ENCODE measurements at regions of chrX and their contacts with region 1.

Region 1: DNA sequence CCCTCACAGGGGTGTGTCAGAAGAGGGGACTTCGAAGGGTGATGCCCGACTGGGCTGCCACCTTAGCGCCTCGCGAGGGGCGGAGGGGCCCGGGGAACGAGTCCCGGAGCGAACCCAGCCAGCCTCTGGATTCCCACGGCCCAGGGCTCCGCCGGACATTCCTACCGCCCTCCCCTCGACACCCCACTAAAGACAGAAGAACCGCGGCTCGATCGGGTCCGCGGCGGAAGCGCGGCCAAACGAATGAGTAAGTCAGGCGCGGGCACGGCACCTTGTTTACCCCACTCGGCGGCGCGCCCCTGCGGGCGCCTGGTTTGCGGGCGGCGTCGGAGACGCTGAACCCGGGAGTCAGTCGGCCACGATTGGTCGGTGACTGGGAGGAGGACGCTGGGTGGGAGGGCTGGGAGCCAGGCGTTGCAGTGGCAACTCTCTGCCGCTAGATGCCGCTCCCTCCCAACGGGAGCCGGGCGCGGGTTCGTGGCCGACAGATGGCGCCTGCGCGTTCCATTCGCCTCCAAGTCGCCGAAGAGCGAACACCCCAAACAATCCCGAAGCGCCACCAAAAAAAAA is 1.4 kb upstream of the STAG2 start:
- DNase-seq: peak; percentile 87 to 93 (median 92)
- ATAC-seq: peak; percentile 73 to 92 (median 88)
- H3K4me3 ChIP-seq: peak overlapping the region; percentile 51 to 97 (median 80)
- H3K27ac ChIP-seq: peak overlapping the region; percentile 87 to 100 (median 98)
- H3K4me1 ChIP-seq: peaks cover 0 to 23% (median 9%) of the 10 kb centered on the region in 12 donors
- H3K27me3 ChIP-seq: no peaks in the 10 kb centered on the region
- CTCF ChIP-seq: peak; percentile 76 to 96 (median 84)
- POLR2A ChIP-seq: peak in 1 of 2 donors; percentile 76

Region 2: GRCh38 chrX:123740006-123740405 is 220.1 kb before region 1 on chrX:
- intact Hi-C with region 1: no loop called
- DNase-seq: no peak
- ATAC-seq: no peak
- H3K4me3 ChIP-seq: no peak overlapping the region
- H3K27ac ChIP-seq: no peak overlapping the region
- H3K4me1 ChIP-seq: no peaks in the 10 kb centered on the region
- H3K27me3 ChIP-seq: no peaks in the 10 kb centered on the region
- CTCF ChIP-seq: no peak
- POLR2A ChIP-seq: no peak

Region 3: DNA sequence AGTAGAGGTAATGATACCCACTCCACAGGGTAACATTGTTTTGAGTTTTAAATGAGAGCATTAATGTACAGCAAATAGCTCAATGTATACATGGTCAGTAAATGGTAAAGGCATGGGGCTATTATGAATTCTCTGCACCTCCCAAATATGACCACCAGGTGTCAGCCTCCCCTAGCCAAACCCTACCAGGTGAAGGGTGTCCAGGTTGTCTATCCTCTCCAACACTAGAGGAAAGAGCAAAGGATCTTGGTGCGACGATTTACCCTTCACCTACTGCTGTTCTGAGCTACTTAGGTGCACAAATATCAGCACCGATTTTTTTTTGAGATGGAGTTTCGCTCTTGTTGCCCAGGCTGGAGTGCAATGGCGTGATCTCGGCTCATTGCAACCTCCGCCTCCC is 126.7 kb before region 1 on chrX:
- intact Hi-C with region 1: loop called in 2 of 10 experiments (anchors 10 kb)
- DNase-seq: peak in 2 of 5 donors; percentile 13 to 25
- ATAC-seq: peak in 3 of 4 donors; percentile 74 to 88 (median 85)
- H3K4me3 ChIP-seq: no peak overlapping the region
- H3K27ac ChIP-seq: no peak overlapping the region
- H3K4me1 ChIP-seq: no peaks in the 10 kb centered on the region
- H3K27me3 ChIP-seq: no peaks in the 10 kb centered on the region
- CTCF ChIP-seq: peak; percentile 60 to 78 (median 70)
- POLR2A ChIP-seq: no peak

Region 4: DNA sequence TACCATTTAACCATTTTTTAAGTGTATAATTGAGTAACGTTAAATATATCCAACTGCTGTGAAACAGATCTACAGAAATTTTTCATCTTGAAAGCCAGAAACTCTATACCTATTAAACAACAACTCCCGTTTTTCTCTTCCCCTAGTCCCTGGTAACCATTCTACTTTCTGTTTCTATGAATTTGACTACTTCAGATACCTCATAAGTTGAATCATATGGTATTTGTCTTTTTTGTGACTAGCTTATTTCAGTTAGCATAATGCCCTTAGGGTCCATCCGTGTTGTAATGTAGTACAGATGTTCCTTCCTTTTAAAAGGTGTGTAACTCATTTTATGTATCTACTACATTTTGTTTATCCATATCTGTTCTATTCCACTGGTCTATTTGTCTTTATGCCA is 50.0 kb after region 1 on chrX:
- intact Hi-C with region 1: loop called in 4 of 10 experiments (anchors 5 to 10 kb)
- DNase-seq: no peak
- ATAC-seq: no peak
- H3K4me3 ChIP-seq: no peak overlapping the region
- H3K27ac ChIP-seq: no peak overlapping the region
- H3K4me1 ChIP-seq: peaks cover 0 to 22% (median 0%) of the 10 kb centered on the region in 12 donors
- H3K27me3 ChIP-seq: no peaks in the 10 kb centered on the region
- CTCF ChIP-seq: no peak
- POLR2A ChIP-seq: no peak

Region 5: GRCh38 chrX:124018023-124018422 is 57.9 kb after region 1 on chrX:
- intact Hi-C with region 1: loop called in 5 of 10 experiments (anchors 5 to 10 kb)
- DNase-seq: no peak
- ATAC-seq: no peak
- H3K4me3 ChIP-seq: no peak overlapping the region
- H3K27ac ChIP-seq: no peak overlapping the region
- H3K4me1 ChIP-seq: peaks cover 0 to 22% (median 0%) of the 10 kb centered on the region in 12 donors
- H3K27me3 ChIP-seq: no peaks in the 10 kb centered on the region
- CTCF ChIP-seq: peak in 4 of 12 donors; percentile 12 to 29 (median 20)
- POLR2A ChIP-seq: no peak

Region 6: GRCh38 chrX:124023838-124024238 is 63.7 kb after region 1 on chrX:
- intact Hi-C with region 1: loop called in 4 of 10 experiments (anchors 5 to 10 kb)
- DNase-seq: no peak
- ATAC-seq: no peak
- H3K4me3 ChIP-seq: no peak overlapping the region
- H3K27ac ChIP-seq: no peak overlapping the region
- H3K4me1 ChIP-seq: peaks cover 0 to 14% (median 0%) of the 10 kb centered on the region in 12 donors
- H3K27me3 ChIP-seq: no peaks in the 10 kb centered on the region
- CTCF ChIP-seq: no peak
- POLR2A ChIP-seq: no peak